T-cell (primary cell): ENCODE measurements at regions of chr12 and their contacts with region 1.

Region 1: GRCh38 chr12:9760699-9761418 is at the start of gene CD69:
- DNase-seq: peak in 34 of 35 experiments; percentile 52 to 94 (median 85)
- ATAC-seq: peak; percentile 56 to 63 (median 62)
- H3K4me3 ChIP-seq: peak within 1 kb of the TSS; percentile 63 to 95
- H3K4me3 Mint-ChIP-seq: peak within 1 kb of the TSS; percentile 87 to 97 (median 93)
- H3K27ac ChIP-seq: peak within 1 kb of the TSS; percentile 98
- H3K27ac Mint-ChIP-seq: peak within 1 kb of the TSS; percentile 97 to 99
- H3K4me1 ChIP-seq: peaks cover 32 to 50% of the 10 kb centered on the region in 2 experiments
- H3K4me1 Mint-ChIP-seq: peaks cover 55 to 69% (median 62%) of the 10 kb centered on the region in 3 donors
- H3K27me3 ChIP-seq: no peaks in the 10 kb centered on the region
- H3K27me3 Mint-ChIP-seq: no peaks in the 10 kb centered on the region
- total RNA-seq, gene CD69: 36.7 to 746 (median 39.4) TPM

Region 2: DNA sequence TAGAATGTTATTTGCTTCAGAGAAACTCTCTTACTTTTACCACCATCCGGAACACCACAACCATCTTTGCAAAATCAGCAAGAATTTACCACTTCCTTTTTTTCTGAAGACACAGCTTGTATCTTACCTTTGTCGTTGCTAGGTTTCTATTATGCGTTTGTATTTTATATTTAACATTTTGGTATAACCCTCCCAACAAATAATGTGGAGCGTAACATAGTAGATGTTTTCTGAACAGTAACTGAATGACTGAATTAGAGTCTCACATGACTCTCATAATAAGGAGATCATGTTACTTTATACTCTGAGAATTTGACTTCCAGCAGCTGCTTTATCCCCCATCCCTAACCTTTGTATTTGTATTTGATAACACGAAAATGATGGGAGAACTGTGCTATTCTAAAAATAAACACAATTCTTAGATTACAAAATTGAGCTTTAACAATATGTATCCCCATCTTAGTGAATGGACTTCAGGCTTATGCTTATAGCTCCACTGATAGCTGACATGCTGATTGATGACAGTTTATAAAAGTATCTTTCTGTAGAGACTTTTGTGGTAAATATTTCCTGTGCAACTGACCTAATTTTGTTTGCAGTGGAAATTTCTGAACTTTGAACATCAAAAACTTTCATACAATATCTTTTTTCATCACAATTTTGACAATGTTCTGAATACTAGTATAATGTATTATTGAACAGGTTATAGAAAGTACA is 145.3 kb before region 1 on chr12:
- CTCF ChIA-PET with region 1: no interaction called
- POLR2A ChIA-PET with region 1: interaction called in 1 of 2 experiments, 16 read pairs
- DNase-seq: peak in 2 of 35 experiments; percentile 10 to 68
- ATAC-seq: peak; percentile 86 to 94 (median 88)
- H3K4me3 ChIP-seq: peak overlapping the region in 1 of 2 donors; percentile 21
- H3K4me3 Mint-ChIP-seq: peak overlapping the region; percentile 56 to 82 (median 70)
- H3K27ac ChIP-seq: peak overlapping the region; percentile 92
- H3K27ac Mint-ChIP-seq: peak overlapping the region; percentile 92 to 99
- H3K4me1 ChIP-seq: peaks cover 25 to 26% of the 10 kb centered on the region in 2 experiments
- H3K4me1 Mint-ChIP-seq: peaks cover 78 to 93% (median 84%) of the 10 kb centered on the region in 3 donors
- H3K27me3 ChIP-seq: no peaks in the 10 kb centered on the region
- H3K27me3 Mint-ChIP-seq: no peaks in the 10 kb centered on the region

Region 3: DNA sequence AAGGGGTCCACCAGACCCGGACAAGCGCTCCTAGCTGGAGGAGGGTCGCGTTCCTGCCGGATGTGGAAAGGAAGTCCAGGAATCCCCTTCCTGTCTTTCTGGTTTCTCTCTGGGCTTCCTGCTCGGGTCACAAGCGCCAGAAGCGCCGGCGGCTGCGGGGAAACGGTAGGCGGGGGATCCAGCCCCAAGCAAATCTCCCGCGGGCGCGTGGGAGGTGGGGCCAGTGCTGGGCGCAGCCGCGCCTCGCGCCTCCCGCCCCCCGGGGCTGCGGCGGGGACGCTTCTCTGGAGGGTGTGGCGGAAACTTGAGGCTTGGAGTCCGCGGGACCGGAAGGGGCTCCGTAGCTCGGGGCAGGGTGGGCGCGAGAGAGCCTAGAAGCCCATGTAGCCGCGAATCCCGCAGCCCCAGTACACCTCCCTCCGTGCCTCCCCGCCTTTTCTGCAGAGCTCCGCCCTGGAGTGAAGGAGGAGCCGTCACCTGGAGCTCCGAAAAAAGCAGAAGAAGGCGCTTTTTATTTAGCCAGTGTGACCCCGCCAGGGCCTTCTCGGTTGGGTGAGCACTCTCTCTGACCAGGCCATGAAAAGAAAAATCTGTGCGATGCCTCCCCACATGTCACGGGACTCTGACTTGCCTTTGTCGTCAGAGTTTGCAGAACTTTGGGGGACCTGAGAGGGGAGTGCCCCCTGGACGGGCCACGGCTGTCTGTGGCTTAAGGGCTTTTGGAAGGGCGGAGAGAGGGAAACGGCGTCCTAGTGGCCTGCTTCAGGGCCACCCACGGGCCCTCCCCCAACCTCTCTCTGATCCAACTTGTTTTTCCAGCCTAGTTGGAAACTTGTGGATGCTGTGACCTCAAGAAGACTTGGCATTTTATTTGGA is 112.8 kb before region 1 on chr12:
- CTCF ChIA-PET with region 1: interaction called, 3 to 7 read pairs
- POLR2A ChIA-PET with region 1: interaction called in 1 of 2 experiments, 12 read pairs
- DNase-seq: peak; percentile 82 to 95 (median 89)
- ATAC-seq: peak; percentile 76 to 80 (median 78)
- H3K4me3 ChIP-seq: peak overlapping the region; percentile 77 to 100
- H3K4me3 Mint-ChIP-seq: peak overlapping the region; percentile 90 to 95 (median 92)
- H3K27ac ChIP-seq: peak overlapping the region; percentile 91
- H3K27ac Mint-ChIP-seq: peak overlapping the region; percentile 98
- H3K4me1 ChIP-seq: peaks cover 21 to 39% of the 10 kb centered on the region in 2 experiments
- H3K4me1 Mint-ChIP-seq: peaks cover 52 to 64% (median 58%) of the 10 kb centered on the region in 3 donors
- H3K27me3 ChIP-seq: no peaks in the 10 kb centered on the region
- H3K27me3 Mint-ChIP-seq: no peaks in the 10 kb centered on the region

Region 4: GRCh38 chr12:9773216-9773877 is 12.5 kb after region 1 on chr12:
- CTCF ChIA-PET with region 1: interaction called in 1 of 2 experiments, 18 read pairs
- POLR2A ChIA-PET with region 1: interaction called, 4 to 53 read pairs
- DNase-seq: peak in 1 of 35 experiments; percentile 48
- ATAC-seq: peak in 3 of 4 experiments; percentile 63 to 80 (median 66)
- H3K4me3 ChIP-seq: no peak overlapping the region
- H3K4me3 Mint-ChIP-seq: peak overlapping the region; percentile 5 to 61 (median 37)
- H3K27ac ChIP-seq: peak overlapping the region; percentile 14
- H3K27ac Mint-ChIP-seq: peak overlapping the region; percentile 78 to 84
- H3K4me1 ChIP-seq: peaks cover 25 to 50% of the 10 kb centered on the region in 2 experiments
- H3K4me1 Mint-ChIP-seq: peaks cover 80 to 89% (median 82%) of the 10 kb centered on the region in 3 donors
- H3K27me3 ChIP-seq: no peaks in the 10 kb centered on the region
- H3K27me3 Mint-ChIP-seq: no peaks in the 10 kb centered on the region

Region 5: DNA sequence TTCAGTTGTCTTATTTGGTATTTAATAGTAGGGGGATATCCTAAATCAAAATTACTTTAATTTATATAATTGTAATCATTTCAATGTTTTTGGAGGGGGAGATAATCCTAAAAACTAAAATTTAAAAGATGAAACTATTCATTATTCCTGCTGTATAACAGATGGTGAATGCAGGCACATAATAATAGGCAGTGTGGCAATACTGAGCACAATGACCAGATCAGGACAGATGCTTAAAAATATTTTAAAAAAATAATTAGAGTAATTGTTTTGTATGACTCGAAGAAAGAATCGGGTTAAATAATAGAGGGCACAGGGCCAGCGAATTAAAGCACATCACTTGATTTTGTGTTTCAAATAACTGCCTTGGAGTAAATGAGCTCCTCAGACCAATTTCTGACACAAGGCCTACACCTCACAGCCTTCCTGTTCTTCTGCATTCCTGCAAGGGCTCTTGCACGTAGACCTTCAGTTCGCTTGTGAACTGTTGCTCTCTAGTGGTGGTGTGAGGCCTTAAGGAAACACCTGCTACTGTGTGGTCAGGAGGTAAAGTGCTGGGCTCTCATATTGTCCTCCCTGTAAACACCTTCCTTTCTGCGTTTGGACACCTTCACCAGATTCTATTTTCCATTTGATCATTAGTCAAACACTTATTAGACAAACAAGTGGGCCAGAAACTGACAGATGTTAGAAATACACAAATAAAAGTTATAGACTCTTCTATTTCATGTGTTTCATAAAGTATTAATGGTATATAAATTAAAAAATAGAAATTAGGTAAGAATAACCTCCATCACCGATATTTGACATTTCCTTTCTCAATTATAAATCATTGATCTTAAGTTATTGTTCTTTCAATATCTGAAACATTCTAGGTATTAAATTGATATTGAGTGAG is 37.1 kb after region 1 on chr12:
- CTCF ChIA-PET with region 1: interaction called, 8 to 311 read pairs
- POLR2A ChIA-PET with region 1: interaction called, 15 to 80 read pairs
- DNase-seq: peak; percentile 29 to 87 (median 59)
- ATAC-seq: peak; percentile 92 to 98 (median 94)
- H3K4me3 ChIP-seq: no peak overlapping the region
- H3K4me3 Mint-ChIP-seq: peak overlapping the region in 1 of 3 donors; percentile 40
- H3K27ac ChIP-seq: peak overlapping the region; percentile 54
- H3K27ac Mint-ChIP-seq: peak overlapping the region; percentile 24 to 75
- H3K4me1 ChIP-seq: peaks cover 10 to 42% of the 10 kb centered on the region in 2 experiments
- H3K4me1 Mint-ChIP-seq: peaks cover 47 to 51% (median 49%) of the 10 kb centered on the region in 3 donors
- H3K27me3 ChIP-seq: no peaks in the 10 kb centered on the region
- H3K27me3 Mint-ChIP-seq: no peaks in the 10 kb centered on the region

Region 6: GRCh38 chr12:10861366-10861765 is 1100.5 kb after region 1 on chr12:
- CTCF ChIA-PET with region 1: no interaction called
- POLR2A ChIA-PET with region 1: no interaction called
- DNase-seq: no peak
- ATAC-seq: no peak
- H3K4me3 ChIP-seq: no peak overlapping the region
- H3K4me3 Mint-ChIP-seq: no peak overlapping the region
- H3K27ac ChIP-seq: no peak overlapping the region
- H3K27ac Mint-ChIP-seq: no peak overlapping the region
- H3K4me1 ChIP-seq: no peaks in the 10 kb centered on the region
- H3K4me1 Mint-ChIP-seq: no peaks in the 10 kb centered on the region
- H3K27me3 ChIP-seq: no peaks in the 10 kb centered on the region
- H3K27me3 Mint-ChIP-seq: no peaks in the 10 kb centered on the region